ENCODE measurements at regions of chr19 and their contacts with region 1.

Region 1: DNA sequence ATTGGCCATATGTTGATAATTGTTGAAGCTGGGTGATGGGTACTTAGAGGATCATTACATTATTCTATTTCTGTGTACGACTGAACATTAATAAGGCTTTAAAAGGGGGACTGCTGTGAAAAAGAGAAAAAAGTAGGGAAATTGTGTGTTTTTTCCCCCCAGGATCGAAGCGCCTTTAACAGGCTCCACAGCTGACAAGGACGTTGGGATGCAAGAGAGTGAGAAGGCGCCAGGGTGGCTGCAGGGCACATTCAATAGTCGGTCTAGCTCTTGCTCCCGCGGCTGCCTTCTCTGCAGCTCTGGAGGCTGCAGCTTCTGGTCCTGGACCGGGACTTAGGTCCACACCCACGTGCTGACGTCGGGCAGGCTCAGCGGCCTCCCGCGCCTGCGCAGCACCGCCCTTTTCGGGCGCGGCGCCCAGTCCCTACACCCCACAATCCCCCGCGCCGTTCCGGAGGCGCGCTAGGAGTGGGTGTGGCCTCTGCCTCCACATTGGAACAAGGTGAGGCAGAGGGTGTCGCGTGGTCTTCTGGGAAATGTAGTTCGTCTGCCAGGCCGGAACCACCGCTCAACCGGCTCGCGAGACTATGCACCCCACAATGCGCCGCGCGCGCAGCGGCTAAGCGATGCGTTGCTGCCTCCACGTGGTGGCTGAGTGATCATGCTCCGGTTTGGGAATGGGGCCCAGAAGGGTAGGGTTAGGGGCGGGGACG is 4.9 kb upstream of the LRFN3 start:
- DNase-seq: peak; percentile 99 to 100
- ATAC-seq: peak; percentile 100
- H3K4me3 ChIP-seq: no peak overlapping the region
- H3K27ac ChIP-seq: no peak overlapping the region
- H3K4me1 ChIP-seq: no peaks in the 10 kb centered on the region
- H3K27me3 ChIP-seq: no peaks in the 10 kb centered on the region

Region 2: GRCh38 chr19:35569281-35569781 is 362.0 kb before region 1 on chr19:
- intact Hi-C with region 1: no loop called
- DNase-seq: peak in 1 of 2 donors; percentile 69
- ATAC-seq: no peak
- H3K4me3 ChIP-seq: no peak overlapping the region
- H3K27ac ChIP-seq: no peak overlapping the region
- H3K4me1 ChIP-seq: no peaks in the 10 kb centered on the region
- H3K27me3 ChIP-seq: no peaks in the 10 kb centered on the region

Region 3: GRCh38 chr19:35693830-35694599 is 237.3 kb before region 1 on chr19:
- intact Hi-C with region 1: loop called (anchors 1 to 2 kb)
- DNase-seq: peak; percentile 90 to 92
- ATAC-seq: peak; percentile 96
- H3K4me3 ChIP-seq: no peak overlapping the region
- H3K27ac ChIP-seq: no peak overlapping the region
- H3K4me1 ChIP-seq: no peaks in the 10 kb centered on the region
- H3K27me3 ChIP-seq: no peaks in the 10 kb centered on the region

Region 4: DNA sequence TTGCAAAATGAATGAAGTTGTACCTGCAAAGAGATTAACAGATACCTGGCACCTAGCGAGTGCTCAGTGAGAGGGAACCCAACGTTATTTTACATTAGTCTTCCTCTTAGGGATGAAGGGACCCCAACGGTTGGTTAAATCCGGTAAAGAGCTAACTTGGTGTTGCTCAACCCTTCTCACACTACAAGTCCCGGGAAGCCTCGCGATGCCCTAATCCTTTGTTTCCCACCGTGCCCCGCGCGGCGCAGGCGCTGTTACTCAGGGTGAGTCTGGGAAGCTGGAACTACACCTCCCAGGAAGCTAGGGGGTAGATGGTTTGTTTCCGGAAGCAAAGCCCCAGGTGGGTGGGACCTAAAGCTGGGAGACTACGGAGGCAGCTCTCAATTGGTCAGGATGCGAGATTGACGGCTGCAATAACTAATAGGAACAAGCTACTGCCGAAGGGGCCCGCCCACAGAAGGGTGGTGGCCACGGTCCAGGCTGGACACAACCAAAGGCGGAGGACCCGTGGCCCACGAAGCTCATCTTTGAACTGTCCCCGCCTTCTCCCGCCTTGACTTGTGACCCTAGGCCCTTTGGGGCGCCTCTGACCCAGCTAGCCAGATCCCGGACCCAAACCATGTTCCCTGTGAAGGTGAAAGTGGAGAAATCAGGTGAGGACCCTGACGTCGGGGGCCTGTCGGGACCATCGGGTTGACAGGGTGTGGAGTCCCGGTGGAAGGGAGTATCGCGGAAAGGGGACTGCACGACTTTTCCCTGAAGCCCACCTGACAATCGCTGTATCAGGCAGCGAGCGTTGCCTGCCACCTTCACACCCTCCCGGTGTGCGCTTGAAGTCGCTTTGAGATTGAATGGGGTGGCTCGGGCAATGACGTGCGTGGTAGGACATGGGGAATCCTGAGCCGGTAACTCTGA is 183.0 kb before region 1 on chr19 and contains the start of gene LIN37:
- intact Hi-C with region 1: loop called (anchors 2 to 5 kb)
- DNase-seq: peak; percentile 99
- ATAC-seq: peak; percentile 92
- H3K4me3 ChIP-seq: peak within 1 kb of the TSS; percentile 55 to 88
- H3K27ac ChIP-seq: peak within 1 kb of the TSS in 1 of 2 donors; percentile 55
- H3K4me1 ChIP-seq: no peaks in the 10 kb centered on the region
- H3K27me3 ChIP-seq: no peaks in the 10 kb centered on the region
- total RNA-seq, gene LIN37: 10.6 to 13.3 TPM

Region 5: GRCh38 chr19:35869327-35870123 is 61.8 kb before region 1 on chr19:
- intact Hi-C with region 1: loop called in 1 of 2 experiments (anchors 10 kb)
- DNase-seq: peak; percentile 76 to 88
- ATAC-seq: no peak
- H3K4me3 ChIP-seq: no peak overlapping the region
- H3K27ac ChIP-seq: no peak overlapping the region
- H3K4me1 ChIP-seq: no peaks in the 10 kb centered on the region
- H3K27me3 ChIP-seq: no peaks in the 10 kb centered on the region

Region 6: DNA sequence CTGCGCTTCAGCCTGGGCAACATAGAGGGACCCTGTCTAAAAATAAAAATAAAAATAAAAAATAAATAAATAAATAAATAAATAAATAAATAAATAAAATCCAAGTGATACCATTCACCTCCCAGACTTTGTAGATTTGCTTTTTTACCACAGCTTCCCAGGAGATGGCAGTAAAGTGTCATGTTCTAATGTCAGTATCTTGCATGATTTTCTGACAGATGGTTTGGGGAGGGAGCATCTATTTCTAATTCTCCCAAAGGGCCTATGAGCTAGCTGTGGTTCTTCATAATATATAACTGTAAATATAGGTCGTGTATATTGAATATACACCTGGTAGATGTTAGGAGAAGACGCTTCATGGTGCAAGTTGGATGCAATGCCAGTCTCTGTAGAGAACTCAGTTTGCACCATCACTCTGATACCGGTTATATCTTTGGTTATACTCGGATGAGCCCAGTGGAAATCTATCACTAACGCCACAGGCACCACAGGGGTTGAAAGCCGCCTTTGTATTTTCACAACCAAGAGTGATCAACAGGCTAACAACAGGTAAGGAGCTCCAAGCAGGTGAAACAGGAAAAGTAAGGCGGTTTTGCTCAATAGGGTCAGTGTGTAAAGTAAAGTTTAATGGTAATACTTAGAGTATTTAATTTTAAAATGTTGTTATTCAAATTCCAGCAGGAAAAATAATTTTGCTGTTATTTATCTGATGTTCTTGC is 49.0 kb before region 1 on chr19:
- intact Hi-C with region 1: loop called (anchors 2 to 10 kb)
- DNase-seq: no peak
- ATAC-seq: no peak
- H3K4me3 ChIP-seq: no peak overlapping the region
- H3K27ac ChIP-seq: no peak overlapping the region
- H3K4me1 ChIP-seq: no peaks in the 10 kb centered on the region
- H3K27me3 ChIP-seq: no peaks in the 10 kb centered on the region

Region 7: GRCh38 chr19:35899547-35900214 is 31.6 kb before region 1 on chr19:
- intact Hi-C with region 1: loop called in 1 of 2 experiments (anchors 2 kb)
- DNase-seq: peak; percentile 90 to 93
- ATAC-seq: peak; percentile 87
- H3K4me3 ChIP-seq: peak overlapping the region; percentile 39 to 74
- H3K27ac ChIP-seq: no peak overlapping the region
- H3K4me1 ChIP-seq: no peaks in the 10 kb centered on the region
- H3K27me3 ChIP-seq: no peaks in the 10 kb centered on the region

Measured in aorta (tissue), 5 donors.